Natural killer cell (primary cell): ENCODE measurements at regions of chr11 and their contacts with region 1.

Region 1: DNA sequence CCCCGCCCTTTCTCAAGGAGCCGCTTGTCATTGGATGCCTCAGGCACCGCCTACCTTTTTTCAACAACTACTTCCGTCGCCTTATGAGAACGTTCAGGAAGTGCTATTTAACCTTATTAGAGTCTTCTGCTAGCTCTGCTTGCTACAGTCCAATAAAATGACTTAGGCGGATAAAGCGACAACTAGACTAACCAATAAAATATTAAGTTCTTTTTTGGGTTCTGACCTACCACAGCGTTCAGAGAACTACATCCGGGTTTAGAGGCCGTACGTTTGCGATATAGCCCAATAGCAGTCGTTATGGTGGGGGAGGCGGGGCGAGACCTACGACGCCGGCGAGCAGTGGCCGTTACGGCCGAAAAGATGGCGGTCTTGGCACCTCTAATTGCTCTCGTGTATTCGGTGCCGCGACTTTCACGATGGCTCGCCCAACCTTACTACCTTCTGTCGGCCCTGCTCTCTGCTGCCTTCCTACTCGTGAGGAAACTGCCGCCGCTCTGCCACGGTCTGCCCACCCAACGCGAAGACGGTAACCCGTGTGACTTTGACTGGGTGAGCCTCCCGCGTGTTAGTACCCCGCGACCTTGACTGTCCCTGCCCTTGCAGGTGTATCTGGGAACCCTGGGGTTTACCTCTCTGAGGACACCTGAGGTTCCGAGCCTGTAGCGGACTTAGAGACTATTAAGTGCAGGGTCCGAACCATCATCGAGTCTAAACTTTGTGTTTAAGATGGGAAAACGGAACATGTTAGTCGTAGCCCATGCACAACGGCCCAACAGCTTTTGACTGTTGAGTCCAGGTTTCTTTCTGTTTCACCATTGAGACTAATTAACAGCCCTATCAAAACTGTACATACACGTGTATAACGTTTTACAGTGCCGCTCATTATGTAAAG is at the start of gene TMX2:
- DNase-seq: peak; percentile 86 to 96
- ATAC-seq: peak; percentile 88 to 96 (median 89)
- H3K4me3 ChIP-seq: peak within 1 kb of the TSS; percentile 72
- H3K4me3 Mint-ChIP-seq: peak within 1 kb of the TSS; percentile 96
- H3K27ac ChIP-seq: peak within 1 kb of the TSS; percentile 73
- H3K27ac Mint-ChIP-seq: peak within 1 kb of the TSS; percentile 93 to 94
- H3K4me1 ChIP-seq: peaks cover 19% of the 10 kb centered on the region
- H3K4me1 Mint-ChIP-seq: peaks cover 36 to 41% of the 10 kb centered on the region in 2 donors
- H3K27me3 ChIP-seq: no peaks in the 10 kb centered on the region
- H3K27me3 Mint-ChIP-seq: no peaks in the 10 kb centered on the region
- CTCF ChIP-seq: no peak
- total RNA-seq, gene TMX2: 43.6 to 70.4 (median 45.7) TPM

Region 2: GRCh38 chr11:57567515-57568329 is 144.8 kb before region 1 on chr11 and contains the start of gene UBE2L6:
- intact Hi-C with region 1: loop called (anchors 1 kb)
- DNase-seq: peak; percentile 56 to 95
- ATAC-seq: peak; percentile 76 to 91 (median 78)
- H3K4me3 ChIP-seq: peak within 1 kb of the TSS; percentile 99
- H3K4me3 Mint-ChIP-seq: peak within 1 kb of the TSS; percentile 99
- H3K27ac ChIP-seq: peak within 1 kb of the TSS; percentile 95
- H3K27ac Mint-ChIP-seq: peak within 1 kb of the TSS; percentile 96 to 99
- H3K4me1 ChIP-seq: peaks cover 24% of the 10 kb centered on the region
- H3K4me1 Mint-ChIP-seq: peaks cover 40 to 50% of the 10 kb centered on the region in 2 donors
- H3K27me3 ChIP-seq: no peaks in the 10 kb centered on the region
- H3K27me3 Mint-ChIP-seq: no peaks in the 10 kb centered on the region
- CTCF ChIP-seq: peak; percentile 93
- total RNA-seq, gene UBE2L6: 89.1 to 108 (median 103) TPM

Region 3: GRCh38 chr11:57657194-57658022 is 55.1 kb before region 1 on chr11 and contains the start of gene CLP1:
- intact Hi-C with region 1: loop called (anchors 1 kb)
- DNase-seq: peak; percentile 97 to 99
- ATAC-seq: peak; percentile 95 to 100 (median 98)
- H3K4me3 ChIP-seq: peak within 1 kb of the TSS; percentile 86
- H3K4me3 Mint-ChIP-seq: peak within 1 kb of the TSS; percentile 100
- H3K27ac ChIP-seq: peak within 1 kb of the TSS; percentile 90
- H3K27ac Mint-ChIP-seq: peak within 1 kb of the TSS; percentile 96 to 99
- H3K4me1 ChIP-seq: peaks cover 12% of the 10 kb centered on the region
- H3K4me1 Mint-ChIP-seq: peaks cover 27 to 29% of the 10 kb centered on the region in 2 donors
- H3K27me3 ChIP-seq: no peaks in the 10 kb centered on the region
- H3K27me3 Mint-ChIP-seq: no peaks in the 10 kb centered on the region
- CTCF ChIP-seq: no peak
- total RNA-seq, gene CLP1: 18.5 to 23.1 (median 22.8) TPM

Region 4: GRCh38 chr11:57741132-57742086 is 28.9 kb after region 1 on chr11 and contains the start of gene SELENOH:
- intact Hi-C with region 1: loop called (anchors 1 kb)
- DNase-seq: peak; percentile 81 to 96
- ATAC-seq: peak; percentile 84 to 91 (median 86)
- H3K4me3 ChIP-seq: peak within 1 kb of the TSS; percentile 94
- H3K4me3 Mint-ChIP-seq: peak within 1 kb of the TSS; percentile 99
- H3K27ac ChIP-seq: peak within 1 kb of the TSS; percentile 97
- H3K27ac Mint-ChIP-seq: peak within 1 kb of the TSS; percentile 99
- H3K4me1 ChIP-seq: peaks cover 17% of the 10 kb centered on the region
- H3K4me1 Mint-ChIP-seq: peaks cover 18 to 30% of the 10 kb centered on the region in 2 donors
- H3K27me3 ChIP-seq: no peaks in the 10 kb centered on the region
- H3K27me3 Mint-ChIP-seq: no peaks in the 10 kb centered on the region
- CTCF ChIP-seq: no peak
- total RNA-seq, gene SELENOH: 55.3 to 83.3 (median 61.0) TPM

Region 5: GRCh38 chr11:57787920-57788702 is 75.6 kb after region 1 on chr11:
- intact Hi-C with region 1: no loop called
- DNase-seq: no peak
- ATAC-seq: no peak
- H3K4me3 ChIP-seq: no peak overlapping the region
- H3K4me3 Mint-ChIP-seq: no peak overlapping the region
- H3K27ac ChIP-seq: no peak overlapping the region
- H3K27ac Mint-ChIP-seq: no peak overlapping the region
- H3K4me1 ChIP-seq: peaks cover 25% of the 10 kb centered on the region
- H3K4me1 Mint-ChIP-seq: peaks cover 20 to 25% of the 10 kb centered on the region in 2 donors
- H3K27me3 ChIP-seq: no peaks in the 10 kb centered on the region
- H3K27me3 Mint-ChIP-seq: no peaks in the 10 kb centered on the region
- CTCF ChIP-seq: no peak